Ascending aorta (tissue), 2 donors: ENCODE measurements at regions of chr10 and their contacts with region 1.

Region 1: GRCh38 chr10:103918053-103918846 is at the start of gene STN1:
- DNase-seq: peak; percentile 87 to 98
- H3K4me3 ChIP-seq: peak within 1 kb of the TSS; percentile 76 to 91
- H3K27ac ChIP-seq: peak within 1 kb of the TSS; percentile 96 to 97
- H3K4me1 ChIP-seq: peaks cover 6 to 16% of the 10 kb centered on the region in 2 donors
- H3K27me3 ChIP-seq: no peaks in the 10 kb centered on the region
- CTCF ChIP-seq: no peak
- total RNA-seq, gene STN1: 24.5 TPM

Region 2: DNA sequence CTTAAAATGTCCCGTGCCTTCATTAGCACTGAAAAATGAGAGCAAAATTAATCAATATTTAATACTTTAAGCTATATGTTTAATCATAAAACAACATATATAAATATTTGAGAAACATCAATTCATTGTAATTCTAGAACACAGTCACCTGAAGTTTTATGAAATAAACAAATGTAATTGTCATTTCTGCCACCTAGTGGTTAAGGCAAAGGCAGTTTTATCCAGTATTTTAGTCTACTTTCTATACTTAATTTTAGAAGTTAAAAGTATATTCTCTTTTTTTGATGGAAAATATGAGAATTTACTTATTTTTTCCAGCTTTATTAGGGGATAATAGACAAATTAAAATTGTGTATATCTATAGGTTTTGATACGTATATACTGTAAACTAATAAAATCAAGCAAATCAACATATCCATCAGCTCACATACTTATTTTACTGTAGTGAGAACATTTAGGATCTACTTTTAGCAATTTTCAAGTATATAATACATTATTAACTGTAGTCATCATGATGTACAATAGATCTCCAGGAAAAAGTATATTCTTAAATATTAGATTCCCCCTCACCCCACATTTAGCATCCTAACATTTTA is 584.2 kb before region 1 on chr10:
- intact Hi-C with region 1: no loop called
- DNase-seq: no peak
- H3K4me3 ChIP-seq: no peak overlapping the region
- H3K27ac ChIP-seq: no peak overlapping the region
- H3K4me1 ChIP-seq: no peaks in the 10 kb centered on the region
- H3K27me3 ChIP-seq: no peaks in the 10 kb centered on the region
- CTCF ChIP-seq: peak; percentile 38 to 62 (median 52)

Region 3: DNA sequence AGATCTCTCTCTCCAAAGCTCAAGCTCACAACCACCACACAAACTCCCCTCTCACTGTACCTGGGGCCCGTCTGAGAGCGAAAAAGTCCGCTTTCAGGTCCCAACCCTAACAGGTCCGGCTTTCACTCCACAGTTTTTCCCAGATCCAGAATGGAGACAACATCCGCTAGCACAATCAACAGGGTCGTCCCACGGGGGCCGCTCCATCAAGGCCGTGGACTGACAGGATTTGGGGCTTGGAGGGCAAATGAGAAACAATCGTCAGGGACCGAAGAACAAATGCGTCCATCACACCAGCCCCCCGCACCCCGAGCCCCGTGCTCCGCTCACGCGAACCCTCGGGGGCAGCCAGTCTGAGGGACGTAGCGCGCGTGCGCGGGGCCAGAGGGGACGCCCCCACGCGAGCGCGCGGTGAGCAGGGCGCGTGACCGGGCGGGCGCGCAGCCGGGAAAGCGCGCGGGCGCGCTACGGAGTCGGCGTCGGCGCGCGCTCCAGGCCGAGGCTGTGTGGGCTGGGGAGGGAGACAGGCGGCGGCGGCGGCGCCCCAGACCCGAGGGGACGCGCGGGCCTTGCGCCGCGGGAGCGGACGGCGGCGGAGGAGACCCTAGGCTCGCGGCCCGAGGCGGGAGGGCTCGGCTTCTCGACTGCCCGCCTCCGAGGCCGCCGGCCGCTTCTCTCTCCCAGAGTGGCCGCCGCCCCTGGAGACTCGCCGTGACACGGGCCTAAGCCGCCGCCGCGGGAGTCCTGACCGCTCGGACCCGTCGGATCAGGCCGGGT is 48.6 kb after region 1 on chr10 and contains the start of gene SLK:
- intact Hi-C with region 1: loop called (anchors 1 kb)
- DNase-seq: peak; percentile 16 to 86
- H3K4me3 ChIP-seq: peak within 1 kb of the TSS; percentile 87 to 100
- H3K27ac ChIP-seq: peak within 1 kb of the TSS; percentile 91 to 99
- H3K4me1 ChIP-seq: peaks cover 0 to 13% of the 10 kb centered on the region in 2 donors
- H3K27me3 ChIP-seq: no peaks in the 10 kb centered on the region
- CTCF ChIP-seq: peak in 1 of 3 experiments; percentile 10
- total RNA-seq, gene SLK: 26.1 TPM

Region 4: DNA sequence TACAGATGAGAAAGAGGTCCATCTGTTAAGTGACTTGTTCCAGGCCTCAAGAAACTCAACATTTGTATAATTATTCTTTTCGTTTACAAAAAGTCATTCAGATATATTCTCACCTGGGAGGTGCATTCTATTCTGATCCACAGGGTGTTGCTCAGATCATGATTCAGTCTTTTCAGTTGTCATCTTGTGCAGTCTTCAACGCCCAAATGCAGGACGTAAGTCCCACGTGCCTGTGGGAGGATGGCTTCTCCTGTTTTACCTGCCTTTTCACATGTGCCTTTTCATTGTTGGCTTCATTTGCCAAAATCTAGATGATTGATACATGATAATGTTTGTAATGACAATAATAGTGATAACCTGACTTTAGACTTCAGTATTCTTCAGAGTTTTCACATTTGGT is 95.2 kb after region 1 on chr10:
- intact Hi-C with region 1: no loop called
- DNase-seq: no peak
- H3K4me3 ChIP-seq: no peak overlapping the region
- H3K27ac ChIP-seq: no peak overlapping the region
- H3K4me1 ChIP-seq: no peaks in the 10 kb centered on the region
- H3K27me3 ChIP-seq: no peaks in the 10 kb centered on the region
- CTCF ChIP-seq: no peak